IMR-90 (cell line): ENCODE measurements at regions of chr12 and their contacts with region 1.

Region 1: GRCh38 chr12:67692135-67692534 is 43.6 kb downstream of the DYRK2 start:
- DNase-seq: no peak
- ATAC-seq: no peak
- H3K4me3 ChIP-seq: no peak overlapping the region
- H3K27ac ChIP-seq: no peak overlapping the region
- H3K4me1 ChIP-seq: no peaks in the 10 kb centered on the region
- H3K27me3 ChIP-seq: no peaks in the 10 kb centered on the region
- CTCF ChIP-seq: no peak
- POLR2A ChIP-seq: no peak
- RAD21 ChIP-seq: no peak

Region 2: GRCh38 chr12:68030248-68030647 is 338.1 kb after region 1 on chr12:
- CTCF ChIA-PET with region 1: no interaction called
- POLR2A ChIA-PET with region 1: interaction called, 16 read pairs
- dilution Hi-C with region 1: no loop called
- in situ Hi-C with region 1: no loop called
- intact Hi-C with region 1: no loop called
- DNase-seq: no peak
- ATAC-seq: no peak
- H3K4me3 ChIP-seq: no peak overlapping the region
- H3K27ac ChIP-seq: no peak overlapping the region
- H3K4me1 ChIP-seq: no peaks in the 10 kb centered on the region
- H3K27me3 ChIP-seq: peaks cover 4% of the 10 kb centered on the region; the same call in 1 of the 2 replicates
- CTCF ChIP-seq: no peak
- POLR2A ChIP-seq: no peak
- RAD21 ChIP-seq: no peak